Activated CD4-positive, alpha-beta memory T cell treated with anti-CD3 and anti-CD28 coated beads for 36 hours (primary cell): ENCODE measurements at regions of chr12 and their contacts with region 1.

Region 1: DNA sequence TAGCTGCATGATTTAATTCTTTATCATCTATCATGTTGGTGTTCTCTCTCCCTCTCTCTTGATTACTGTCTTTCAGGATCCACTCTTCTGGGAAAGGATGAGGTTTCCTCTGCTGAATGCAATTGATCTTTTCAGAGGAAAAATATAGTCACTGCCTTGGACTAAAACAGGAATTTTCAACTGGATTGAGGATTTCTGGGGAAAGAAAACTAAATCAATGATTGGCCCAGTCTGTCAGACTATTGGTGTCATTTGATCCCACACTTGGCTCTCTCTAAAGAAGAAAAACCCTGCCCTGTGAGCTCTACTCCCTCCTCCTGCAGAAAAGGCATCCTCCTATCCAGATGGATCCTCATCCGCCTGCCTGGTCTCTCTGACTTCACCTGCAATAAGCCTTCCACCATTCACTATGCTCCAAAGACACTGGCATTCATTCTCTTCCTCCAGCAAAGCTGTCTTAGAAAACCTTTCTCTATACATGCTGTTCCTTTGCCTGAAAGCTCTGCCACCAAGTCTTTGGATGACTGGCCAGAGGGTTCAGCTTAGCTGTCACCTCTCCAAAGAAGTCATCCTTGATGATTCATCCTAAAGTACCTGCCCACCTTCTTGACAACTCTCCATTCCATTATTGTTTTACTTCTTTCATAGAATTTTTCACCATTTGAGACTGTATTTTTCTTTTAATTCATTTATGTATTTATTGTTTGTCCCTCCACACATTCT is 127.7 kb upstream of the CAND1 start:
- DNase-seq: peak; percentile 43
- H3K4me3 Mint-ChIP-seq: no peak overlapping the region
- H3K27ac Mint-ChIP-seq: no peak overlapping the region
- H3K4me1 Mint-ChIP-seq: peaks cover 8% of the 10 kb centered on the region
- H3K27me3 Mint-ChIP-seq: peaks cover 21% of the 10 kb centered on the region

Region 2: GRCh38 chr12:66662729-66663128 is 478.7 kb before region 1 on chr12:
- CTCF ChIA-PET with region 1: no interaction called
- POLR2A ChIA-PET with region 1: no interaction called
- intact Hi-C with region 1: no loop called
- DNase-seq: no peak
- H3K4me3 Mint-ChIP-seq: no peak overlapping the region
- H3K27ac Mint-ChIP-seq: no peak overlapping the region
- H3K4me1 Mint-ChIP-seq: no peaks in the 10 kb centered on the region
- H3K27me3 Mint-ChIP-seq: peaks cover 16% of the 10 kb centered on the region

Region 3: DNA sequence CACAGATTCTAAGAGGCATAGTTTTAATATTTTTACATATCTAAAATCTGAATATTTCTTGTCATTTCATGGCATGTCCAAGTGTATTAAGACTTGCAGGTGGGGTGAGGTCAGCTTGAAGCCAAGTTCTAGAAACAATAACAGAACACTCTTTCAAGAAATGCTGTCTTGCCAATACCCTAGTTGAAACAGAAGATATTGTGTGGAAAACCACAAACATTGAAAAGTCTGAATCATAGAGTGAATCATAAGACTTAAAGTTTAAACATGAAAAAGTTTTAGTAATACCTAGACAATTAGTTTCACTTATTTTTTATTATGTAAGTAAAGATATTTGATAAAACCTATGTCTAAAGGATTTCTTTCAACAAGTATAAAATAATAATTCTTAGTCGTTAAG is 63.8 kb before region 1 on chr12:
- CTCF ChIA-PET with region 1: no interaction called
- POLR2A ChIA-PET with region 1: no interaction called
- intact Hi-C with region 1: loop called (anchors 5 kb)
- DNase-seq: no peak
- H3K4me3 Mint-ChIP-seq: no peak overlapping the region
- H3K27ac Mint-ChIP-seq: no peak overlapping the region
- H3K4me1 Mint-ChIP-seq: peaks cover 3% of the 10 kb centered on the region
- H3K27me3 Mint-ChIP-seq: peaks cover 19% of the 10 kb centered on the region

Region 4: GRCh38 chr12:67161322-67161918 is 20.0 kb after region 1 on chr12:
- CTCF ChIA-PET with region 1: interaction called, 22 read pairs
- POLR2A ChIA-PET with region 1: no interaction called
- intact Hi-C with region 1: no loop called
- DNase-seq: peak; percentile 45
- H3K4me3 Mint-ChIP-seq: no peak overlapping the region
- H3K27ac Mint-ChIP-seq: no peak overlapping the region
- H3K4me1 Mint-ChIP-seq: no peaks in the 10 kb centered on the region
- H3K27me3 Mint-ChIP-seq: peaks cover 2% of the 10 kb centered on the region